IMR-90 (cell line): ENCODE measurements at regions of chr1 and their contacts with region 1.

Region 1: DNA sequence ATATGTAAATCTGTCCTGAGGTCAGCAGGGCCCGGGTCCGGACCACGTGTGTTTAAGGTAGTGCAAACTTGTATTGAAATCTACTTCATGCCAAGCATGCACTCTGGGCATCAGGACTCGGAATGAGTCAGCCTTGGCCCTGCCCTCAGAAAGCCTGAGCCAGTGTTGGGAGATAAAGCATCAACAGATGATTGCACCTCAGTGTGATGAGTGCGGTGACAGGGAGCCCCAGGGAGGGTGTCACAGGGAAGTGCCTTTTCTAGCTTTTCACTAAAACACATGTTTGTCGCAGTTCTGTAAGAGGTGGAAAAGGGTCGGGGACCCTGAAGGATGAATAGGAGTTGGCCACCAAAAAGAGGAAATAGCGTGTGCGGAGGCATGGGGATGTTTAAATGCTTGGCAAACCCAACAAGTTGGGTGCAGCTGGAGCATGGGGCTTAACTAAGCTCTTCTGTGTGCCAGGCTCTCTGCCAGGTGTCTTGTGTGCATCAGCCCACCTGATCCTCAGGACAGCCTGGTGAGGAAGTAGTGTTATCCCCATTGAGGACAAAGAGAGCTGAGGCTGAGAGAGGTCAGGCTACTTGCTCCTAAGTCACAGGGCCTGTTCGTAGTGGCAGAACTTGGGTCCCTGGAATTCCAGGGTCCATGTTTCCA is 48.2 kb upstream of the EPB41 start:
- DNase-seq: no peak
- ATAC-seq: 0 out of 2 replicates have a peak, but pooled peaks have one; percentile 51
- H3K4me3 ChIP-seq: no peak overlapping the region
- H3K27ac ChIP-seq: no peak overlapping the region
- H3K4me1 ChIP-seq: no peaks in the 10 kb centered on the region
- H3K27me3 ChIP-seq: peaks cover 46% of the 10 kb centered on the region
- CTCF ChIP-seq: no peak
- POLR2A ChIP-seq: no peak
- RAD21 ChIP-seq: no peak

Region 2: DNA sequence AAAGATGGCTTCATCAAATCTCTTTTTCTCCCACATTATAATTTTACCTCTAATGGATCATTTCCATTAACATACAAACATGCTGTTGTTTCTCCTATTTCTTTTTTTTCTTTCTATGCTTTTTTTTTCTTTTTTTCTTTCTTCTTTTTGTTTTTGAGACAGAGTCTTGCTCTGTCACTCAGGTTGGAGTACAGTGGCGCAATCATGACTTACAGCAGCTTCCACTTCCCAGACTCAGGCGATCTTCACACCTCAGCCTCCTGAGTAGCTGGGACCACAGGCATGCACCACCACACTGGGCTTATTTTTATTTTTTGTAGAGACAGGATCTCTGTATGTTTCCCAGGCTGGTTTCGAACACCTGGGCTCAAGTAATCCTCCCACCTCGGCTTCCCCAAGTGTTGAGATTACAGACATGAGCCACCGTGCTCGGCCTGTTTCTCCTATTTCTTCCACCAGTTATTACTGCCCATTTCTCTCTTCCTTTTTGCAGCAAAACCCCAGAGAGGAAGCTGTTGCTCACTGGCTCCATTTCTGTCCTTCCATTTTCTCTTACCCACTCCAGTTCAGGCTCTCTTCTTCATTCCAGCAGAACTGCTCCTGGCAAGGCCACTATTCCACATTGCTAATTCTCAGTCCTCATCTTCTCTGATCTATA is 86.2 kb before region 1 on chr1:
- CTCF ChIA-PET with region 1: interaction called, 6 read pairs
- POLR2A ChIA-PET with region 1: no interaction called
- dilution Hi-C with region 1: no loop called
- in situ Hi-C with region 1: loop called (anchors 5 kb)
- intact Hi-C with region 1: no loop called
- DNase-seq: no peak
- ATAC-seq: no peak
- H3K4me3 ChIP-seq: no peak overlapping the region
- H3K27ac ChIP-seq: no peak overlapping the region
- H3K4me1 ChIP-seq: peaks cover 2% of the 10 kb centered on the region; the same call in 1 of the 2 replicates
- H3K27me3 ChIP-seq: no peaks in the 10 kb centered on the region
- CTCF ChIP-seq: no peak
- POLR2A ChIP-seq: no peak
- RAD21 ChIP-seq: no peak